Ovary (tissue), 10 donors: ENCODE measurements at regions of chr5 and their contacts with region 1.

Region 1: GRCh38 chr5:88140856-88141752 is 127.5 kb downstream of the TMEM161B start:
- DNase-seq: peak; percentile 97 to 99 (median 98)
- H3K4me3 ChIP-seq: peak overlapping the region; percentile 46
- H3K27ac ChIP-seq: peak overlapping the region in 1 of 2 donors; percentile 66
- H3K4me1 ChIP-seq: peaks cover 1% of the 10 kb centered on the region
- H3K27me3 ChIP-seq: no peaks in the 10 kb centered on the region
- CTCF ChIP-seq: peak; percentile 45 to 76 (median 46)
- EP300 ChIP-seq: no peak
- POLR2A ChIP-seq: peak; percentile 54

Region 2: GRCh38 chr5:87867281-87867680 is 273.8 kb before region 1 on chr5:
- intact Hi-C with region 1: no loop called
- DNase-seq: no peak
- H3K4me3 ChIP-seq: no peak overlapping the region
- H3K27ac ChIP-seq: no peak overlapping the region
- H3K4me1 ChIP-seq: no peaks in the 10 kb centered on the region
- H3K27me3 ChIP-seq: no peaks in the 10 kb centered on the region
- CTCF ChIP-seq: no peak
- EP300 ChIP-seq: no peak
- POLR2A ChIP-seq: no peak

Region 3: DNA sequence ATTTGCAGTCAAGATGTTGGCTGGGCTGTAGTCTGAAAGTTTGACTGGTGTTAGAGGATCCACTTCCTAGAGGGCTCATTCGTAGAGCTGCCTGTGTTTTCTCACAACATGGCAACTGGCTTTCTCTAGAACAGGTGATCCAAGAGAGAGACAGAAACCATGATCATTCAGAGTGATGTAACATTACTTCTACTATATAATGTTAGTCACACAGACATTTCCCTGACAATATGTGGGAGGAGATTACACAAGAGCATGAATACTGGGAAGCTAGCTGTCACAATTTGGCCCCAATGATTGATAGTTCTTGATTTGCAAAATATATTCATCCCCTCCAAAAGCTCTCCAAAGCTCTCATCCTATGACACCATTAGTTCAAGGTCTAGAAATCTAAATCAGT is 138.5 kb after region 1 on chr5:
- intact Hi-C with region 1: loop called in 1 of 4 experiments (anchors 10 kb)
- DNase-seq: no peak
- H3K4me3 ChIP-seq: no peak overlapping the region
- H3K27ac ChIP-seq: no peak overlapping the region
- H3K4me1 ChIP-seq: no peaks in the 10 kb centered on the region
- H3K27me3 ChIP-seq: no peaks in the 10 kb centered on the region
- CTCF ChIP-seq: no peak
- EP300 ChIP-seq: no peak
- POLR2A ChIP-seq: no peak

Region 4: GRCh38 chr5:88680253-88681132 is 539.4 kb after region 1 on chr5:
- intact Hi-C with region 1: loop called in 1 of 4 experiments (anchors 5 kb)
- DNase-seq: peak; percentile 38 to 78 (median 56)
- H3K4me3 ChIP-seq: peak overlapping the region; percentile 34
- H3K27ac ChIP-seq: no peak overlapping the region
- H3K4me1 ChIP-seq: peaks cover 1% of the 10 kb centered on the region
- H3K27me3 ChIP-seq: peaks cover 4% of the 10 kb centered on the region
- CTCF ChIP-seq: peak; percentile 54 to 76 (median 71)
- EP300 ChIP-seq: no peak
- POLR2A ChIP-seq: no peak

Region 5: GRCh38 chr5:88833371-88834130 is 692.4 kb after region 1 on chr5:
- intact Hi-C with region 1: loop called in 1 of 4 experiments (anchors 5 kb)
- DNase-seq: peak; percentile 47 to 66 (median 54)
- H3K4me3 ChIP-seq: no peak overlapping the region
- H3K27ac ChIP-seq: peak overlapping the region in 1 of 2 donors; percentile 41
- H3K4me1 ChIP-seq: peaks cover 13% of the 10 kb centered on the region
- H3K27me3 ChIP-seq: no peaks in the 10 kb centered on the region
- CTCF ChIP-seq: no peak
- EP300 ChIP-seq: no peak
- POLR2A ChIP-seq: no peak